Activated B cell treated with CpG ODN at 0.5 μM for 24 hours (primary cell): ENCODE measurements at regions of chr1 and their contacts with region 1.

Region 1: DNA sequence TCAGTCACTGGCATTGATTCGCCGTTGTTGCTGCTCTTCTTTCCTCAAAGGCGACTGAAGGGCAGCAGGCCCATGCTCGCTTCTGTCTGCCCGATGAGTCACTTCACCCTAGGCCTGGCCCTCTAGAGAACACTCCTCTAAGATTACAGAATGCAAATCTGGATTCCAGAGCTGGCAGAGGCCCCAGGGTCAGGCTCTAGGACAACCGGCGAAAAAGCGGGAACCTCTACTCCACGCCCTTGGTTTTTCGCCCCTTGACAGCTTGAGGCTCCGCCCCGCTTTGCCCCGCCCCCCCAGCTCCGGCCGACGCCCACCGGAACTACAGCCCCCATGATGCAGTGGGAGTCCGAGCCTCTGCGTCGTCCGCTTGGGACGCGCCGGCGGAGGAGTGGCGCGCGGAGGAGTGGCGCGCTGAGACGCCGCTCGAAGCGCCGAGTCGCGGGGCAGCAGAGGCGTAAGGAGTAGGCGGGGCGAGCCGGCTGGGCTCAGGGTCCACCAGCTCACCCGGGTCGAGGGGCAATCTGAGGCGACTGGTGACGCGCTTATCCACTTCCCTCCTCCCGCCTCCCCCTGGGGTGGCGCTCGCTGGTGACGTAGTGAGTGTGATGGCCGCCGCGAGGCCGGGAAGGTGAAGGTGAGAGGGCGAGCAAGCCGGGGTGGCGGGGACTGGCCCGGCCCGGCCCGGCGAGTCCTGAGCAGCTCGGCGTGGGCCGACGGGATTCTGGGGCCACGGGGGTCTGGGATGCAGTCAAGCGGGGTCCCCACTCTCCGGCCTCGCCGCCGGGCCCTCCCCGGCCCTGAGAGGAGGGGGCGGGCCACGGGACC is at the start of gene MFN2:
- DNase-seq: peak; percentile 95
- ATAC-seq: peak; percentile 95
- H3K4me3 Mint-ChIP-seq: peak within 1 kb of the TSS; percentile 90
- H3K27ac Mint-ChIP-seq: peak within 1 kb of the TSS; percentile 85
- H3K4me1 Mint-ChIP-seq: peaks cover 34% of the 10 kb centered on the region
- H3K27me3 Mint-ChIP-seq: no peaks in the 10 kb centered on the region
- CTCF ChIP-seq: no peak
- total RNA-seq, gene MFN2: 46.5 and 54.1 TPM in 2 replicates

Region 2: GRCh38 chr1:10472220-10473144 is 1507.6 kb before region 1 on chr1 and contains the start of gene DFFA:
- CTCF ChIA-PET with region 1: no interaction called
- POLR2A ChIA-PET with region 1: no interaction called
- intact Hi-C with region 1: loop called (anchors 5 kb)
- DNase-seq: peak; percentile 82
- ATAC-seq: peak; percentile 78
- H3K4me3 Mint-ChIP-seq: peak within 1 kb of the TSS; percentile 94
- H3K27ac Mint-ChIP-seq: peak within 1 kb of the TSS; percentile 90
- H3K4me1 Mint-ChIP-seq: peaks cover 51% of the 10 kb centered on the region
- H3K27me3 Mint-ChIP-seq: no peaks in the 10 kb centered on the region
- CTCF ChIP-seq: no peak
- total RNA-seq, gene DFFA: 34.3 and 39.0 TPM in 2 replicates

Region 3: GRCh38 chr1:11012250-11013171 is 967.6 kb before region 1 on chr1 and contains the start of gene TARDBP:
- CTCF ChIA-PET with region 1: no interaction called
- POLR2A ChIA-PET with region 1: no interaction called
- intact Hi-C with region 1: loop called (anchors 1 kb)
- DNase-seq: peak; percentile 93
- ATAC-seq: peak; percentile 87
- H3K4me3 Mint-ChIP-seq: peak within 1 kb of the TSS; percentile 89
- H3K27ac Mint-ChIP-seq: peak within 1 kb of the TSS; percentile 99
- H3K4me1 Mint-ChIP-seq: peaks cover 35% of the 10 kb centered on the region
- H3K27me3 Mint-ChIP-seq: no peaks in the 10 kb centered on the region
- CTCF ChIP-seq: no peak
- total RNA-seq, gene TARDBP: 170 and 193 TPM in 2 replicates

Region 4: DNA sequence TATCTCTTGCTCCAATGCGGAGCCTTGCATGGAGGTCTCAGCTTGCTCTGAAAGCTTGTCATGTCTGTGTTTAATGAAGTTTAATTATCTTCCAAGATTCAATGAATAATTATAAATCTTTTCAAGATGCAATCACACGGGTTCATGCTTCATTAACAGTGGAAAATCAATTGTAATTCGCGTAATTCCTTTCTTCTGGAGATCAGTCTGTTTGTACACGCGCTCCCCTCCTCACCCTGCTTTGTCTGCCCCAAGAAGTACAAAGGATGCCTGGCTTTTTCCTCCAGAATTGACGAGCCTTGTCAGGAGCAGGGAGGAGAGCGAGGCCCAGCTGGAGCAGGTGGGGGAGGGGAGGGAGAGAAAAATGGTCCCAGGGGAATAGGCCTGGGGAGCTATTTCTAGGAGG is 566.1 kb before region 1 on chr1:
- CTCF ChIA-PET with region 1: no interaction called
- POLR2A ChIA-PET with region 1: no interaction called
- intact Hi-C with region 1: no loop called
- DNase-seq: no peak
- ATAC-seq: no peak
- H3K4me3 Mint-ChIP-seq: no peak overlapping the region
- H3K27ac Mint-ChIP-seq: no peak overlapping the region
- H3K4me1 Mint-ChIP-seq: no peaks in the 10 kb centered on the region
- H3K27me3 Mint-ChIP-seq: peaks cover 17% of the 10 kb centered on the region
- CTCF ChIP-seq: no peak

Region 5: GRCh38 chr1:11925938-11926292 is 54.1 kb before region 1 on chr1:
- CTCF ChIA-PET with region 1: no interaction called
- POLR2A ChIA-PET with region 1: interaction called, 8 read pairs
- intact Hi-C with region 1: loop called (anchors 1 kb)
- DNase-seq: no peak
- ATAC-seq: peak; percentile 3
- H3K4me3 Mint-ChIP-seq: no peak overlapping the region
- H3K27ac Mint-ChIP-seq: no peak overlapping the region
- H3K4me1 Mint-ChIP-seq: peaks cover 42% of the 10 kb centered on the region
- H3K27me3 Mint-ChIP-seq: no peaks in the 10 kb centered on the region
- CTCF ChIP-seq: no peak

Region 6: GRCh38 chr1:11934302-11935056 is 45.6 kb before region 1 on chr1 and contains the start of gene PLOD1:
- CTCF ChIA-PET with region 1: no interaction called
- POLR2A ChIA-PET with region 1: interaction called, 4 read pairs
- intact Hi-C with region 1: loop called (anchors 1 kb)
- DNase-seq: peak; percentile 76
- ATAC-seq: peak; percentile 99
- H3K4me3 Mint-ChIP-seq: peak within 1 kb of the TSS; percentile 86
- H3K27ac Mint-ChIP-seq: peak within 1 kb of the TSS; percentile 59
- H3K4me1 Mint-ChIP-seq: peaks cover 7% of the 10 kb centered on the region
- H3K27me3 Mint-ChIP-seq: no peaks in the 10 kb centered on the region
- CTCF ChIP-seq: no peak
- total RNA-seq, gene PLOD1: 15.7 and 18.6 TPM in 2 replicates

Region 7: DNA sequence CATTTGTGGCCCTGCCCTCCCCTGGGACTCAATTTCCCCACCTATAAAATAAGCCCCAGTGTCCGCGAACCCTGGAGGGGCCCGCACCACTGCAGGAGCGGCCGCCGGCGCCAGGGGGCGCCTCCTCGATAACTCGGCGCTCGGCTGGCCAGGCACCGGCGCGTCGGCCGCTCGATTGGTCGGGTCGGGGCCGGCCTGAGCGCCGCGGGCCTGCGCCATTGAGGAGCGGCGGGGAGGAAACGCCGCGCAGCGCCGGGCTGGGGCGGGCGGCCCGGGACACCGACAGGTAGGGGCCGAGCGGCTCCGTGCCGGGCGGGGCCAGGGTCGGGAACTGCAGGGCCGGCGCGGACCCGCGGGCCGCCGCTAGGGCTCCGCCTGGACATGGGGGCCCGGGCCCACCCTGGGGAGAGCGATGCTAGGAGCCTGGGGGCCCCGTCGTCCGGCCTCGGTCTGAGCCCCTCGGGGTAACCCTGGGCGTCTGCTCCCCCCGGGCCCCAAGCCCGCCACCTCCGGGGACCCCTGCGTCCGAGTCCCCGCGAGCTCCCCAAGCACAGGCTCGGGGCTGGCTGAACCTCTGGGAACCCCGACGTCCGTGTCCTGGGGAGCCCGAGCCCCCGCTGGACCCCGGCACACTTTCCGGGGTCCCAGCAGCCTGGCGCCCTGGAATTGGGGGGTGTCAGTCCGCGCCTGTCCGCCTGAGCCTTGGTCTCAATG is 249.9 kb after region 1 on chr1 and contains the start of gene VPS13D:
- CTCF ChIA-PET with region 1: no interaction called
- POLR2A ChIA-PET with region 1: no interaction called
- intact Hi-C with region 1: loop called (anchors 1 kb)
- DNase-seq: peak; percentile 87
- ATAC-seq: peak; percentile 96
- H3K4me3 Mint-ChIP-seq: peak within 1 kb of the TSS; percentile 86
- H3K27ac Mint-ChIP-seq: peak within 1 kb of the TSS; percentile 41
- H3K4me1 Mint-ChIP-seq: peaks cover 19% of the 10 kb centered on the region
- H3K27me3 Mint-ChIP-seq: peaks cover 3% of the 10 kb centered on the region
- CTCF ChIP-seq: peak; percentile 26
- total RNA-seq, gene VPS13D: 52.6 and 64.5 TPM in 2 replicates